Right ventricle myocardium inferior (tissue), 1 donor: ENCODE measurements at regions of chr18 and their contacts with region 1.

Region 1: DNA sequence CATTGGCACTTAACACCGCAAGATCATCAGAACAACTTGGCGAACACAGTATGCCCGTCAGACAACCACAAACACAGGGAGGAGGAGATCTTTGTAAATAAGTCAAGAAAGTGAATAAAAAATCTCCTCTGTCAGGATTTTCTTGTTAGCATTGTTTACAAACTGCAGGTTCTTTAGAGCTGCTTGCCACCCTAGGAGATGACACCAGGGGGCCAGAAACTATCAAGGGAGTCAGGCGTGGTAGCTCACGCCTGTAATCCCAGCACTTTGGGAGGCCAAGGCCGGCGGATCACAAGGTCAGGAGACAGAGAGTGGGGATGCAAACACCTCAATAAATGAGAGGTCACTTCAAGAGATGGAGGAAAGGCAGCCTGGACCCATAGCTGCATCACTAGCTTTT is 428.1 kb downstream of the SETBP1 start:
- DNase-seq: no peak
- ATAC-seq: no peak

Region 2: DNA sequence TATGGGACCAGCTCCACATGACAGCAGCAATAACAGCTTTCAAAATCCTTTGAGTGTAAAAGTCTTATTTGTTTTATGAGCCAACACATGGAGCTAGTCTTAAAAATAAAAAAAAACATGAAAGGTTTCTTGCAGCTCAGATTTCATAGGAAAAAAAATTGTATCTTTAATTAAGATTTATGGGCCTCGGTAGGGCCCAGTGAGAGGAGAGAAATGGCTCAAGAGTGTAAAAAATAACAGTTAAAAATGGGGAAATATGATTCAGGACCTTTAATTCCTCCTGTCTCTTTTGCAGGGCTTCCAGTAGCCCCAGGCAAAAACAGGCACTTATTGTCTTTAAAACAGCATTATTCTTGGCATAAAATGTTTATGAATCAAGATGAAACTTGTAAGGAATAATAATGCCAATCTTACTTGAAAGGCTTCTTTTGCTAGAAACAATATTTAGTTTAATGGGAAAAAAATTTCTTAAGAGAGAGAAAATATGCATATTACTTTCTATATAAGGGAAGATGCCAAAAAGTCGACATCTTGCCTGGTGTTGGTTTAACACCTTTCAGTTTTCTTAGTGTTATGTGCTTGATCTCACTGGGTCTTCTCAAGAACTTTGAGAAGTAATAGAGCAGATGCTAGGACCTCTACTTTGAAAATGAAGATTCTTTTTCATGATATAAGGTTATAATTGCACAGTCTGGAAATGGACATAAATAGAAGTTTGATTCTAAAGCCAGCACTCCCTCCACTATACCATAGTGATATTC is 499.4 kb before region 1 on chr18:
- intact Hi-C with region 1: no loop called
- DNase-seq: no peak
- ATAC-seq: no peak

Region 3: GRCh38 chr18:45136381-45137086 is 27.8 kb after region 1 on chr18:
- intact Hi-C with region 1: loop called (anchors 1 kb)
- DNase-seq: no peak
- ATAC-seq: no peak